Panc1 (cell line): ENCODE measurements at regions of chr12 and their contacts with region 1.

Region 1: DNA sequence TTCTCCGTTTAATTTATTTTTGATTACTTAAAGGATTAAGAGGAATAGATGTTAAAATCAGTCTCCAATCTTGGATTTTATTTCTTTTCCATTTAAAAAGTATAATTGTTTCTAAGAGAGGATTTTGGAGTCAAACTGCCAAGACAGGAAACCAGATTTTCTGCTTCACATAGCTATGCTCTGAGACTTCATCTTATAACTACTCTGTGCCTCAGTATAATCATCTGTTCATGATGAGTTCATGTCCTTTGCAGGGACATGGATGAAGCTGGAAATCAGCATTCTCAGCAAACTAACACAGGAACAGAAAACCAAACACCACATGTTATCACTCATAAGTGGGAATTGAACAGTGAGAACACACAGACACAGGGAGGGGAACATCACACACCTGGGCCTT is 9.0 kb upstream of the TAS2R31 start:
- DNase-seq: no peak
- ATAC-seq: no peak
- H3K4me3 ChIP-seq: no peak overlapping the region
- H3K27ac ChIP-seq: no peak overlapping the region
- H3K4me1 ChIP-seq: no peaks in the 10 kb centered on the region
- H3K27me3 ChIP-seq: no peaks in the 10 kb centered on the region
- CTCF ChIP-seq: no peak

Region 2: DNA sequence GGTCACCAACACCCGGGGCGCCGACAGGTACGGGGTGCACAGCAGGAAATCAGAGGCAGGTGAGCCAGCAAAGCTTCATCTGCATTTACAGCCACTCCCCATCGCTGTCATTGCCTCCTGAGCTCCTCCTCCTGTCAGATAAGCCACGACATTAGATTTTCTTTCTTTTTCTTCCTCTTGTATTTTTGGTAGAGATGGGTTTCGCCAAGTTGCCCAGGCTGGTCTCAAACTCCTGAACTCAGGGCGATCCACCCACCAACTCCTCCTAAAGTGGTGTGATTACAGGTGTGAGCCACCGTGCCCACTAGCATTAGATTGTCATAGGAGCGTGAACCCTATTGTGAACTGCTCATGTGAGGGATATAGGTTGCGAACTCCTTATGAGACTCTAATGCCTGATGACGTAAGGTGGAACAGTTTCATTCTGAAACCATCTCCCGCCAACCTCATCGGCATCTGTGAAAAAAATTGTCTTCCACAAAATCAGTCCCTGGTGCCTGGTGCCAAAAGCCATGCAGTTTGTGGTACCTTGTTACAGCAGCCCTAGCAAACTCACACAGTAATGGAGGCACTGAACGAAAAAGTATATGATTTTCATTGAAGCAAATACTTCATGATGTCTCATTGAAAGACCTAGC is 367.8 kb before region 1 on chr12:
- CTCF ChIA-PET with region 1: no interaction called
- POLR2A ChIA-PET with region 1: no interaction called
- in situ Hi-C with region 1: no loop called
- intact Hi-C with region 1: no loop called
- DNase-seq: no peak
- ATAC-seq: peak; percentile 24; the same call in 1 of the 2 replicates
- H3K4me3 ChIP-seq: peak overlapping the region; percentile 56 to 68; a peak in 3 of 4 replicates
- H3K27ac ChIP-seq: no peak overlapping the region
- H3K4me1 ChIP-seq: no peaks in the 10 kb centered on the region
- H3K27me3 ChIP-seq: no peaks in the 10 kb centered on the region; the same call in 1 of the 2 replicates
- CTCF ChIP-seq: no peak

Region 3: GRCh38 chr12:11067514-11067913 is 27.4 kb after region 1 on chr12:
- CTCF ChIA-PET with region 1: no interaction called
- POLR2A ChIA-PET with region 1: no interaction called
- in situ Hi-C with region 1: no loop called
- intact Hi-C with region 1: loop called (anchors 1 kb)
- DNase-seq: no peak
- ATAC-seq: no peak
- H3K4me3 ChIP-seq: no peak overlapping the region
- H3K27ac ChIP-seq: no peak overlapping the region
- H3K4me1 ChIP-seq: no peaks in the 10 kb centered on the region
- H3K27me3 ChIP-seq: no peaks in the 10 kb centered on the region
- CTCF ChIP-seq: no peak

Region 4: DNA sequence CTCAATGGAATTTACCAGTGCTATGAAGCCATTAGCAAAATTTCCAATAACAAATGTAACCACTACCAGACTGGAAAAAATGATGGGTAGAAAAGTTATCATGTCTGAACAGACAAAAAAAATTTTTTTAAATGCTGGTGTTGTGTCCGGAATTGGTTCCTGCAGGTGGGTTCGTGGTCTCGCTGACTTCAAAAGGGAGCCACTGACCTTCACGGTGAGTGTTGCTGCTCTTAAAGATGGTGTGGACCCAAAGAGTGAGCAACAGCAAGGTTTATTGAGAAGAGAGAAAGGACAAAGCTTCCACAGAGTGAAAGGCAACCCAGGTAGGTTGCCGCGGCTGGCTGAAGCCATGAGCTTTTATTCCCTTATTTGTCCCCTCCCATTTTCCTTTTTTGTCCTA is 52.0 kb after region 1 on chr12 and contains the start of gene TAS2R43:
- CTCF ChIA-PET with region 1: no interaction called
- POLR2A ChIA-PET with region 1: no interaction called
- in situ Hi-C with region 1: no loop called
- intact Hi-C with region 1: loop called (anchors 2 kb)
- DNase-seq: no peak
- ATAC-seq: no peak
- H3K4me3 ChIP-seq: no peak within 1 kb of the TSS
- H3K27ac ChIP-seq: no peak within 1 kb of the TSS
- H3K4me1 ChIP-seq: no peaks in the 10 kb centered on the region
- H3K27me3 ChIP-seq: no peaks in the 10 kb centered on the region
- CTCF ChIP-seq: no peak
- total RNA-seq, gene TAS2R43: 0.36 TPM

Region 5: GRCh38 chr12:11108862-11109261 is 68.7 kb after region 1 on chr12:
- CTCF ChIA-PET with region 1: no interaction called
- POLR2A ChIA-PET with region 1: no interaction called
- in situ Hi-C with region 1: no loop called
- intact Hi-C with region 1: no loop called
- DNase-seq: no peak
- ATAC-seq: no peak
- H3K4me3 ChIP-seq: no peak overlapping the region
- H3K27ac ChIP-seq: no peak overlapping the region
- H3K4me1 ChIP-seq: no peaks in the 10 kb centered on the region
- H3K27me3 ChIP-seq: no peaks in the 10 kb centered on the region
- CTCF ChIP-seq: no peak

Region 6: GRCh38 chr12:11150832-11151231 is 110.7 kb after region 1 on chr12:
- CTCF ChIA-PET with region 1: no interaction called
- POLR2A ChIA-PET with region 1: no interaction called
- in situ Hi-C with region 1: no loop called
- intact Hi-C with region 1: loop called (anchors 10 kb)
- DNase-seq: no peak
- ATAC-seq: no peak
- H3K4me3 ChIP-seq: no peak overlapping the region
- H3K27ac ChIP-seq: no peak overlapping the region
- H3K4me1 ChIP-seq: no peaks in the 10 kb centered on the region
- H3K27me3 ChIP-seq: no peaks in the 10 kb centered on the region
- CTCF ChIP-seq: no peak

Region 7: DNA sequence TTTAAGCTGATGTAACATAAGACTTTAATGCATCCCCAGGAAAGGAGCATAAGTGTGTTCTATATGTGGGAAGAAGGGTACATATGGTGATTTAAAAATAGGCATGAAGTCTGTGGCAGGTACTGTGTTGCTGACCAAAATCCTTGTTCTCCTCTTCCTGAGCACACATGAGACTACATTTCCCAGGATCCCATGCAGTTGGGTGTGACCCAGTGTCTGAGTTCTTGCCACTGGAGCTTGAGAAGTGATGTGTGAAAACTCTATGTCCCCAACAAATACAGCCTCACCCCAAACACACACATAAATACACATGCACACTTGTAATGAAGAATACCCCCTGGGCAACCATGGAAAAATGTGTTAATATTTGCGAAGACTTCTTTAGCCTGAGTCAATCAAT is 122.3 kb after region 1 on chr12:
- CTCF ChIA-PET with region 1: no interaction called
- POLR2A ChIA-PET with region 1: interaction called, 12 read pairs
- in situ Hi-C with region 1: no loop called
- intact Hi-C with region 1: loop called (anchors 10 kb)
- DNase-seq: no peak
- ATAC-seq: no peak
- H3K4me3 ChIP-seq: no peak overlapping the region
- H3K27ac ChIP-seq: no peak overlapping the region
- H3K4me1 ChIP-seq: no peaks in the 10 kb centered on the region
- H3K27me3 ChIP-seq: no peaks in the 10 kb centered on the region
- CTCF ChIP-seq: no peak